Activated naive CD4-positive, alpha-beta T cell treated with anti-CD3 and anti-CD28 coated beads for 36 hours (primary cell): ENCODE measurements at regions of chr5 and their contacts with region 1.

Region 1: GRCh38 chr5:100903039-100903887 is at the start of gene ST8SIA4:
- DNase-seq: peak; percentile 95
- H3K4me3 Mint-ChIP-seq: peak within 1 kb of the TSS; percentile 95
- H3K27ac Mint-ChIP-seq: peak within 1 kb of the TSS; percentile 99
- H3K4me1 Mint-ChIP-seq: peaks cover 32% of the 10 kb centered on the region
- H3K27me3 Mint-ChIP-seq: no peaks in the 10 kb centered on the region
- total RNA-seq, gene ST8SIA4: 11.2 to 16.2 TPM

Region 2: GRCh38 chr5:99025298-99026045 is 1877.8 kb before region 1 on chr5:
- CTCF ChIA-PET with region 1: no interaction called
- intact Hi-C with region 1: loop called (anchors 5 kb)
- DNase-seq: no peak
- H3K4me3 Mint-ChIP-seq: no peak overlapping the region
- H3K27ac Mint-ChIP-seq: no peak overlapping the region
- H3K4me1 Mint-ChIP-seq: peaks cover 34% of the 10 kb centered on the region
- H3K27me3 Mint-ChIP-seq: peaks cover 4% of the 10 kb centered on the region

Region 3: DNA sequence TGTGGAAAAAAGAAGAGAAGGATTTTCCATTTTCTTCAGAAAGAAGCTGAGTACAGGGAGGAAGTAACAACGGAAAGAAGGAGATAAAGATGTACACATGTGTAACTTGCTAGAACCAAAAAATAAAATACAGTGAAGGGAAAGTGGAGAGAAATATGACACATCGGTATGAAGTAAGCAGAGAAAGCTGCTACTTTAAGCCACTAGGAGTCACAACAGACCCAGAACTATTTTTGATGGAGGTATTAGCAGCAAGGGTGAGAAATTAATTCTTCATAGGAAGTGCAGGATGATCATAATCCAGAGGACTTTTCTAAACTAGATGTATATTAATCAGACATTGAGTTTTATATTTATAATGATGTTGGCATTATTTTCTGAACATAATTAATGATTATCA is 279.5 kb before region 1 on chr5:
- CTCF ChIA-PET with region 1: no interaction called
- intact Hi-C with region 1: loop called (anchors 1 kb)
- DNase-seq: no peak
- H3K4me3 Mint-ChIP-seq: no peak overlapping the region
- H3K27ac Mint-ChIP-seq: no peak overlapping the region
- H3K4me1 Mint-ChIP-seq: no peaks in the 10 kb centered on the region
- H3K27me3 Mint-ChIP-seq: no peaks in the 10 kb centered on the region

Region 4: GRCh38 chr5:100827481-100827889 is 75.8 kb before region 1 on chr5:
- CTCF ChIA-PET with region 1: interaction called, 4 read pairs
- intact Hi-C with region 1: loop called (anchors 1 kb)
- DNase-seq: peak; percentile 12
- H3K4me3 Mint-ChIP-seq: no peak overlapping the region
- H3K27ac Mint-ChIP-seq: no peak overlapping the region
- H3K4me1 Mint-ChIP-seq: peaks cover 33% of the 10 kb centered on the region
- H3K27me3 Mint-ChIP-seq: no peaks in the 10 kb centered on the region

Region 5: GRCh38 chr5:100872408-100873190 is 30.7 kb before region 1 on chr5:
- CTCF ChIA-PET with region 1: interaction called, 4 read pairs
- intact Hi-C with region 1: loop called (anchors 1 kb)
- DNase-seq: peak; percentile 65
- H3K4me3 Mint-ChIP-seq: no peak overlapping the region
- H3K27ac Mint-ChIP-seq: peak overlapping the region; percentile 64
- H3K4me1 Mint-ChIP-seq: peaks cover 43% of the 10 kb centered on the region
- H3K27me3 Mint-ChIP-seq: no peaks in the 10 kb centered on the region

Region 6: GRCh38 chr5:100965291-100965690 is 62.0 kb after region 1 on chr5:
- CTCF ChIA-PET with region 1: interaction called, 3 read pairs
- intact Hi-C with region 1: loop called (anchors 2 kb)
- DNase-seq: no peak
- H3K4me3 Mint-ChIP-seq: no peak overlapping the region
- H3K27ac Mint-ChIP-seq: no peak overlapping the region
- H3K4me1 Mint-ChIP-seq: peaks cover 11% of the 10 kb centered on the region
- H3K27me3 Mint-ChIP-seq: no peaks in the 10 kb centered on the region

Region 7: DNA sequence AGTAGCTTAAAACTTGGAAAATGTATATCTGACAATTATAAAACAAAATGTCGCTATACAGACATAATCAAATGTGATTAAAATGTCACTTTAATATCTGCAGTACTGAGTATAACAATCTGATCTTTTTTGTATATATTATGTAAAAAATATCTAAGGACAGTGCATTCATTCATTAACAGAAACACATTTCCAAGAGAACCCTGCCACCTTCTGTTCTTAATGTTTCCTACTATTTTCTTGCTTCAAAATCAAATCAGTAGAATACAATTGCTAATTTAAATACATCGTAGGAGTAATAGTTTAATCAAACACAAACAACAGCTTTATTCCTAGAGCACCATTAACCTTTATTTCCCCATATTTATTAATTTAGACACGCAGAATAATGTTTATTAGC is 142.4 kb after region 1 on chr5:
- CTCF ChIA-PET with region 1: no interaction called
- intact Hi-C with region 1: no loop called
- DNase-seq: no peak
- H3K4me3 Mint-ChIP-seq: no peak overlapping the region
- H3K27ac Mint-ChIP-seq: no peak overlapping the region
- H3K4me1 Mint-ChIP-seq: peaks cover 6% of the 10 kb centered on the region
- H3K27me3 Mint-ChIP-seq: no peaks in the 10 kb centered on the region